Lower leg skin (tissue), 4 donors: ENCODE measurements at regions of chr21 and their contacts with region 1.

Region 1: GRCh38 chr21:42117229-42117966 is 46.3 kb downstream of the UMODL1 start:
- DNase-seq: peak; percentile 75 to 95
- H3K4me3 ChIP-seq: no peak overlapping the region
- CTCF ChIP-seq: peak in 1 of 3 donors; percentile 98
- POLR2A ChIP-seq: no peak

Region 2: GRCh38 chr21:41816220-41817165 is 300.9 kb before region 1 on chr21:
- intact Hi-C with region 1: loop called (anchors 10 kb)
- DNase-seq: peak; percentile 34 to 92
- H3K4me3 ChIP-seq: no peak overlapping the region
- CTCF ChIP-seq: peak in 1 of 3 donors; percentile 61
- POLR2A ChIP-seq: no peak

Region 3: GRCh38 chr21:41885341-41886029 is 231.9 kb before region 1 on chr21:
- intact Hi-C with region 1: loop called (anchors 10 kb)
- DNase-seq: no peak
- H3K4me3 ChIP-seq: no peak overlapping the region
- CTCF ChIP-seq: no peak
- POLR2A ChIP-seq: no peak

Region 4: DNA sequence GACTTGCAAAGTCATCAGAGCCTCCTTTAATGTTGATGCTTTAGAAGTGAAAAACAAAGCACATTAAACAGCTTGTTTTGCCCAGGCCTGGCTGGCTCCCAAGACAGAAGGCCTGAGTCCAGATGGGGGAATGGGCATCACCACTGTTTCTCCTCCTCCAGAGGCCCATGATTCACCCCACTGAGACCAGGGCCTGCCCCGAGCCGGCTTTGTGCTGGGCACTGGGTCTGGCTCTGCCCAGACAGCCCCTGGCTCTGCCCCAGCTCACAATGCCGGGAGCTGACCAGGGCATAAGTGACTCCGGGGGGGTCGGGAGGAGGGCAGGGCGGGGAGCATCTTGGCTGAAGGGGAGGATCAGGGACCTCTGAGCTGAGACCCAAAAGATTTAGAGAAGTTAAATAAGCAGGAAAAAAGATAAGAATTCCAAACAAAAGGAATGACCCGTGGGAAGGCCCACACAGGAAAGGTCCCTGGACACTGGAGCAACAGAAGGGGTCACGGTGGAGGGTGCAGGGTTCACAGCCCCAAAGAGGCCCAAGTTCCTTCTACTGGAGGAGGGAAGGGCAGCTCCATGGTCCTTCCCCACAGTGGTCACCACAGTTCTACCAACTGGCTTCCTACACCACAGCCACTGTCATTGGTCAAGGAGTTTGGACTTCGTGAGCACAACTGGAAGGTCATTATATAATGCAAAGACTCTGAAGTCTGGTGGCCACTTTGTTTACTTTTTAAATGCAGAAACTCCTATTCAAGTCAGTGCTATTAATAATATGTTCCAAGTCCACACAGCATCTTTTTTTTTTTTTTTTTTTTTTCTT is 169.1 kb before region 1 on chr21:
- intact Hi-C with region 1: loop called (anchors 10 kb)
- DNase-seq: no peak
- H3K4me3 ChIP-seq: no peak overlapping the region
- CTCF ChIP-seq: no peak
- POLR2A ChIP-seq: no peak

Region 5: GRCh38 chr21:42135386-42136052 is 18.1 kb after region 1 on chr21:
- intact Hi-C with region 1: no loop called
- DNase-seq: no peak
- H3K4me3 ChIP-seq: no peak overlapping the region
- CTCF ChIP-seq: no peak
- POLR2A ChIP-seq: no peak